ENCODE measurements at regions of chr5 and their contacts with region 1.

Region 1: GRCh38 chr5:73693481-73694061 is 67.6 kb downstream of the ARHGEF28 start:
- DNase-seq: no peak
- H3K4me3 ChIP-seq: no peak overlapping the region
- H3K27ac ChIP-seq: no peak overlapping the region
- H3K4me1 ChIP-seq: no peaks in the 10 kb centered on the region
- H3K27me3 ChIP-seq: no peaks in the 10 kb centered on the region
- CTCF ChIP-seq: peak; percentile 39

Region 2: GRCh38 chr5:73066466-73066865 is 627.1 kb before region 1 on chr5:
- intact Hi-C with region 1: no loop called
- DNase-seq: no peak
- H3K4me3 ChIP-seq: no peak overlapping the region
- H3K27ac ChIP-seq: no peak overlapping the region
- H3K4me1 ChIP-seq: no peaks in the 10 kb centered on the region
- H3K27me3 ChIP-seq: no peaks in the 10 kb centered on the region
- CTCF ChIP-seq: no peak

Region 3: DNA sequence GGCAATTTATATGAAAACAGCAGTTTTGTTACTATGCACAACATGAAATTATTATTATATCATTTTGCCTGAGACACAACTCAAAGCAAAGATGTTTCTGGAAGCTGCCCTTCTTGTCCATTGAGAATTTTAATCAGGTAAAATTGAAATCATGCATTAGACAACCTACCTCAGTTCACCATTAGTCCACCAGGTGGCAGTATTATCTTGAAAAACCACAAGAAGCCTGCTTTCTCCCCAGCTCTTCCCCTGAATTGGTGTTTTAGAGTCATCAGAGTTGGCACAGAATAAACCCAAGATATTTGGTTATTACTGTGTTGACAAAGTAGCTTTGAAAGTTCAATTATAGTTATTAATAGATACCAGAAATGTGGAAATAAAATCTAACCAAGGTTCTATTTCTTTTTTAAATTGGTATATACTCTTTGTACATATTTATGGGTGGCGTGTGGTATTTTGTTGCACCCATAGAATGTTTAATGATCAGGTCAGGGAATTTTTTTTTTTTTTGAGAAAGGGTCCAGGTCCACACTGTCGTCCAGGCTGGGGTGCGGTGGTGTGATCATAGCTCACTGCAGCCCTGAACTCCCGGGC is 102.4 kb before region 1 on chr5:
- intact Hi-C with region 1: loop called (anchors 5 kb)
- DNase-seq: peak; percentile 75
- H3K4me3 ChIP-seq: no peak overlapping the region
- H3K27ac ChIP-seq: no peak overlapping the region
- H3K4me1 ChIP-seq: no peaks in the 10 kb centered on the region
- H3K27me3 ChIP-seq: no peaks in the 10 kb centered on the region
- CTCF ChIP-seq: peak; percentile 88

Region 4: GRCh38 chr5:73783828-73784227 is 90.3 kb after region 1 on chr5:
- intact Hi-C with region 1: loop called (anchors 10 kb)
- DNase-seq: no peak
- H3K4me3 ChIP-seq: no peak overlapping the region
- H3K27ac ChIP-seq: no peak overlapping the region
- H3K4me1 ChIP-seq: no peaks in the 10 kb centered on the region
- H3K27me3 ChIP-seq: no peaks in the 10 kb centered on the region
- CTCF ChIP-seq: no peak

Region 5: DNA sequence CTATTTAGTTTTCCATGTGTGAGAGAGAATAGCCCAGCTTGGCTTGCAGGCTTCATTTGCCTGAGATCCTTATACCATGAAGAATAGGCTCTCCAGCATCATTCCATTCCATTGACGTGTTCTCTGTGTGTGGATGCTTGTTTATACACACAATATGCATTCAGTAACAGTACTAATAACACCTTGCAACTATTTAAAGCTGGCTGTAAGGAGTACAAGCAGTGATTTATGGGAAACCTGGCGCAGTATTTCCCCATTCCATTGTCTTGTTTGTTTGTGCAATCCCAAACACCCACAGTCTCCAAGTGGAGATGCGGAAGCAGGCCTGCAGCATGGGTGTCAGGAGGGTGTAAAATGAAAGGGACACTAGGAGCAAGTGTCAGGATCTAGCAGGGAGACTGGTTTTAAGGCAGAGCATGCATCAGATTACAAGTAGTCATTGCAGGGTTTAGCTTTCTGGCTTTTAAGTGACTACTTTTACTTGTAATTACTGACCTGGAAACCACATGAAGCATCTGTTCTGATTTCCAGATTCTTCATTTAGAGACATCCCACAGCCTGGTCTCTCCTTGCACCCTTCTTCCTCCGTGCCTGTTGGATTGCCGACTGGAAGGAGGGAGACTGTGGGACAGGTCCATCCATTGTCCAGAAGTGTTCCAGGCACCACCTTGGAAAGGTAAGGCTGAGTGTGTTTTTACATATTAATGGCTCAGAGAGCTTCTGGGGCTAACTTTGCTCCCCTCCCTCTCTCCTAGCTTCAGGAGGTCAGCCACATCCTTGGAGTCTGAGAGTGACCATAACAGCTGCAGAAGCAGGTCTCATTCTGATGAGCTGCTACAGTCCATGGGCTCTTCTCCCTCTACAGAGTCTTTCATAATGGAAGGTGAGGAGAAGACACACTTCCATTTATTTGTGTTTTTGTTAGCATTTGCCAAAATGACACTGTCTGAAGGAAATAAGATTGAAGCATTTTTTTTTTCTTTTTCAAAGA is 174.1 kb after region 1 on chr5:
- intact Hi-C with region 1: no loop called
- DNase-seq: no peak
- H3K4me3 ChIP-seq: no peak overlapping the region
- H3K27ac ChIP-seq: no peak overlapping the region
- H3K4me1 ChIP-seq: no peaks in the 10 kb centered on the region
- H3K27me3 ChIP-seq: no peaks in the 10 kb centered on the region
- CTCF ChIP-seq: no peak